ENCODE measurements at regions of chr16 and their contacts with region 1.

Region 1: GRCh38 chr16:720990-721764 is at the start of gene ANTKMT:
- DNase-seq: peak; percentile 96
- H3K4me3 ChIP-seq: peak within 1 kb of the TSS; percentile 95
- H3K27ac ChIP-seq: peak within 1 kb of the TSS; percentile 93
- H3K4me1 ChIP-seq: peaks cover 62% of the 10 kb centered on the region
- CTCF ChIP-seq: no peak
- total RNA-seq, gene ANTKMT: 44.8 and 51.3 TPM in 2 replicates

Region 2: GRCh38 chr16:684067-684794 is 36.9 kb before region 1 on chr16 and contains the start of gene JMJD8:
- CTCF ChIA-PET with region 1: no interaction called
- POLR2A ChIA-PET with region 1: no interaction called
- intact Hi-C with region 1: loop called (anchors 5 kb)
- DNase-seq: peak; percentile 97
- H3K4me3 ChIP-seq: peak within 1 kb of the TSS; percentile 83
- H3K27ac ChIP-seq: peak within 1 kb of the TSS; percentile 33
- H3K4me1 ChIP-seq: peaks cover 36% of the 10 kb centered on the region
- CTCF ChIP-seq: no peak
- total RNA-seq, gene JMJD8: 70.6 and 82.3 TPM in 2 replicates

Region 3: DNA sequence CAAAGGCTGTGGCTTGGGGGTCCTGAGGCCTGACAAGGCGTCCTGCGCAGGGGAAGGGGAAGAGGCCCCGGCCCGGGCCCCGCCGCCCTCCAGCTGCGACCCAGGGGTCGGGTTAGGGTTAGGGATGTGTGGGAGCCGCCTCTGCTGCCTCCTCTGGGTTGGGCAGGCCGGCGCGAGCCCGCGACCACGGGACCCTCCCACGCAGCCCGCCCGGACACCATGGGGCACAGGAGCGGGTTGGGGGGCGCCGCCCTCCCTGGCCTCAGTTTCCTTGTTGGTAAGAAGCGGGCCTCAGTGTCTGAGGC is 19.2 kb after region 1 on chr16:
- CTCF ChIA-PET with region 1: interaction called, 4 read pairs
- POLR2A ChIA-PET with region 1: interaction called, 26 read pairs
- intact Hi-C with region 1: loop called (anchors 2 kb)
- DNase-seq: no peak
- H3K4me3 ChIP-seq: peak overlapping the region; percentile 91
- H3K27ac ChIP-seq: peak overlapping the region; percentile 97
- H3K4me1 ChIP-seq: peaks cover 50% of the 10 kb centered on the region
- CTCF ChIP-seq: no peak

Region 4: GRCh38 chr16:901715-902601 is 180.8 kb after region 1 on chr16:
- CTCF ChIA-PET with region 1: no interaction called
- POLR2A ChIA-PET with region 1: no interaction called
- intact Hi-C with region 1: no loop called
- DNase-seq: no peak
- H3K4me3 ChIP-seq: no peak overlapping the region
- H3K27ac ChIP-seq: no peak overlapping the region
- H3K4me1 ChIP-seq: no peaks in the 10 kb centered on the region
- CTCF ChIP-seq: no peak